AG04450 (cell line): ENCODE measurements at regions of chr9 and their contacts with region 1.

Region 1: GRCh38 chr9:126947529-126947928 is 32.9 kb downstream of the RALGPS1 start:
- DNase-seq: no peak
- H3K4me3 ChIP-seq: no peak overlapping the region
- H3K27ac ChIP-seq: no peak overlapping the region
- H3K27me3 ChIP-seq: peaks cover 6% of the 10 kb centered on the region
- CTCF ChIP-seq: no peak

Region 2: DNA sequence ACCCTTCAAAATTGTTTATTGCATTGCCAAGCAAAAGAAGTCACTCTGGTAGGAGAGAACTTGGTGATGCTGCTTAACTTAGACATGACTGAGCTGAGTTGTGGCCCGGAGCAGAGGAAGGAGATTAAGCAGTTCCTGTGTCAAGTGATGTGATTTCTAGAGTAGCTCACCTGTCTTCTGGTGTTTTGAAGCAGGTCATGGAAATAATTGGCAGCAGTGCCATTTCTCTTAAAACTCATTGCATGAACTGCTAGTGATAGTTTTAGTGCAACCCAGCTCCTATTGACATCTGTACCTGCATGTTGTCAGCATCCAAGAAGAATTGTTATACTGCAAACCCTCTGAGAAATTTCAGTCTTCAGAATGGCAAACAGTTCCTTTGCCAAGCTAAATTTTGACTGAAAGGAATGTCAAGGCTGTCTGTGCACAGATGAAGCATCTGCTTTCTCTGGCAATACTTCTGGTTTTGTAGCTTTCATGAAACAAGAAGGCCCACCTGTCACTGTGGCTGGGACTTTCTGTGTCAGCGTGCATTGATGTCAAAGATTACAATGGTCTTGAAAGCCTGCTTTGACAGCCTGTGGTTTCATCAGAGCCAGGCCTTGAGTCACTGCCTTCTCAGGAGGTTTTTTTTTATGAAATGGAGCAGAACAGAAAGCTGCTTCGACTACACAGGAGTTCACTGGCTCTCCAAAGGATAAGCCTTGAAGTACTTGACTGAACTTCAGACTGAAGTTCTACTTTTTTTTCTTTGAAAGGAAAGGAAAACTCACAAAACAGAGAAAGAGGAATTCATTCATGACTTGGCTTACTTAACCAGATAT is 57.6 kb after region 1 on chr9:
- CTCF ChIA-PET with region 1: no interaction called
- POLR2A ChIA-PET with region 1: no interaction called
- DNase-seq: no peak
- H3K4me3 ChIP-seq: no peak overlapping the region
- H3K27ac ChIP-seq: no peak overlapping the region
- H3K27me3 ChIP-seq: no peaks in the 10 kb centered on the region
- CTCF ChIP-seq: no peak

Region 3: GRCh38 chr9:127458921-127459320 is 511.4 kb after region 1 on chr9:
- CTCF ChIA-PET with region 1: interaction called, 12 read pairs
- POLR2A ChIA-PET with region 1: no interaction called
- DNase-seq: no peak
- H3K4me3 ChIP-seq: no peak overlapping the region
- H3K27ac ChIP-seq: no peak overlapping the region
- H3K27me3 ChIP-seq: no peaks in the 10 kb centered on the region
- CTCF ChIP-seq: no peak